T-cell (primary cell): ENCODE measurements at regions of chr3 and their contacts with region 1.

Region 1: DNA sequence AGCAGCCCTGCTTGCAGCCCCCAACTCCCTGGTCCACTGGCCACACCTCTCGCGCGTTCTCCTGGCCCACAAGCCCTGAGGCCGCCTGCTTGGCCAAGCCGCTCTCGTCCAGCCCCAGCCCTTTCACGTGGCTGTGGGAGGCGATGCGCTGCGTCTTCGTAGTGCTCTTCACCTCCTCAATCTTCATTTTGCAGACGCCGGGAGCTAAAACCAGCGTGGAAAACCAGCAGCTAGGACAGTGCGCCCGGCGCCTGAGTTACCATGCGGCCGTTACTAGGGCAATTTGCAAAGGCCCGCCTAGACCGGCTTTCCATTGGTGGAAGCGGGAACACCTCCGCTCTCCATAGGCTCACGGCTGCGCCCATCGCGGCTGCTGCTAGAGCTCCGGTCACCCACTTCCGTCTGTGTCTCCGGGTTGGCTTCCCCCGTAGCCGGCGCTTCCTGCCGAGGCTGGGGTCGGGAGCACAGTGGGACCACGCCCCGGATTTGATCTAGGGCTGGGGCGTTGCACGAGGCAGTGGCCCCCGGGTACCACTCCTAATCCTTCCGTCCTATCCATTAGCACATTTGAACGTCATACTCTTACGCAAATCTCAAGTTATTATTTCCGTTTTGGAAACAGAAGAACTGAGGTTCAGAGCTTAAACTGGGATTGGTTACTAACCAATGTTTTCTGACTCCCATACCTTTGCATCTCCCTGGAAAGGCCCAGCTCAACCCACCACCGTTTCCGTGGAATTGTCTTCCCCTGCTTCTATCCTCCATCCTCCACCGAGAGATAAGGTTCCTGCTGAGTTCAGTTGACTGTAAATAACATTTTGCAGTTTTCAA is at the start of gene RUVBL1:
- DNase-seq: peak; percentile 87 to 99 (median 98)
- ATAC-seq: peak; percentile 94 to 99 (median 99)
- H3K4me3 ChIP-seq: peak within 1 kb of the TSS; percentile 70 to 96
- H3K4me3 Mint-ChIP-seq: peak within 1 kb of the TSS; percentile 97 to 100 (median 97)
- H3K27ac ChIP-seq: peak within 1 kb of the TSS; percentile 97
- H3K27ac Mint-ChIP-seq: peak within 1 kb of the TSS; percentile 94 to 95
- H3K4me1 ChIP-seq: peaks cover 12 to 21% of the 10 kb centered on the region in 2 experiments
- H3K4me1 Mint-ChIP-seq: peaks cover 29 to 42% (median 32%) of the 10 kb centered on the region in 3 donors
- H3K27me3 ChIP-seq: no peaks in the 10 kb centered on the region
- H3K27me3 Mint-ChIP-seq: no peaks in the 10 kb centered on the region
- total RNA-seq, gene RUVBL1: 21.4 to 33.4 (median 29.9) TPM

Region 2: DNA sequence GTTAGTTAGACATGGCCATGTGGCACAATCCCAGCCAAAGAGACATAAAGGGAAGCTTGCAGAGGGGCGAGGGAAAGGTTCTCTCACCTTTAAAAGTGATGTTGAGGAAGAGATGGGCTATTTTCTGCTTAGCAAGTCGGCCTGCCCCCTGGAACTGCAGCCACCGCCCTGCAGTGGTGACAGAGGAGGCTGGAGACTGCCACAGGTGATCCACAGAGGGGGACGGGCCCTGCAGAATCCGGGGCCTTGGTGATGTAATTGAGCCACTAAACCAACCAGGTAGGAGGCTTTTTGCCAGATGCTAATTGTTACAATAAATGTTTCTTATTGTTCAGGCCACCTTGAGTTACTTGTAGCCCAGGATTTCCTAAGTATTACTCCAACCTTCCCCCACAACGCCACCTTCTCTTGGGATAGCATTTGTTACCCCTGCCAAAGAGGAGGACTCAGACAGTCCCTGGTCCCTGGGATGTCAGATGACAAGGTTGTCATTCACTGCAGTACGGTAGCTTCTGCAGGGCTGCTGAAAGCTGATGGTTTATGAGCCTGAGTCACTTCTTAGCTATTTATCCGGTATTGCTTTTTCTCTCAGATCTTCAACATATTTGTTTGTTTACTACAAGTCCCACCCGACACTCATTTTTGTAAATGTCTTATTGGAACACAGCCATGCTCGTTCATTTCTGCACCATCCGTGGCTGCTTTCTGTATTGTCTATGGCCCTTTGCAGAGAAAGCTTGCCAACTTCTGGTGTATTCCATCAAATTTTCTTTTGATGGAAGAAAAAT is 134.8 kb before region 1 on chr3:
- CTCF ChIA-PET with region 1: no interaction called
- POLR2A ChIA-PET with region 1: no interaction called
- DNase-seq: no peak
- ATAC-seq: no peak
- H3K4me3 ChIP-seq: no peak overlapping the region
- H3K4me3 Mint-ChIP-seq: no peak overlapping the region
- H3K27ac ChIP-seq: no peak overlapping the region
- H3K27ac Mint-ChIP-seq: no peak overlapping the region
- H3K4me1 ChIP-seq: no peaks in the 10 kb centered on the region
- H3K4me1 Mint-ChIP-seq: no peaks in the 10 kb centered on the region
- H3K27me3 ChIP-seq: peaks cover 0 to 14% of the 10 kb centered on the region in 2 experiments
- H3K27me3 Mint-ChIP-seq: peaks cover 0 to 4% of the 10 kb centered on the region in 2 donors

Region 3: GRCh38 chr3:128095222-128095703 is 28.5 kb before region 1 on chr3:
- CTCF ChIA-PET with region 1: interaction called, 10 to 11 read pairs
- POLR2A ChIA-PET with region 1: no interaction called
- DNase-seq: peak; percentile 52 to 86 (median 77)
- ATAC-seq: peak; percentile 85 to 99 (median 97)
- H3K4me3 ChIP-seq: no peak overlapping the region
- H3K4me3 Mint-ChIP-seq: no peak overlapping the region
- H3K27ac ChIP-seq: no peak overlapping the region
- H3K27ac Mint-ChIP-seq: no peak overlapping the region
- H3K4me1 ChIP-seq: peaks cover 3 to 13% of the 10 kb centered on the region in 2 experiments
- H3K4me1 Mint-ChIP-seq: peaks cover 5 to 10% (median 7%) of the 10 kb centered on the region in 3 donors
- H3K27me3 ChIP-seq: no peaks in the 10 kb centered on the region
- H3K27me3 Mint-ChIP-seq: no peaks in the 10 kb centered on the region

Region 4: GRCh38 chr3:128153156-128154041 is 29.6 kb after region 1 on chr3 and contains the start of gene EEFSEC:
- CTCF ChIA-PET with region 1: interaction called, 3 to 19 read pairs
- POLR2A ChIA-PET with region 1: interaction called, 4 to 10 read pairs
- DNase-seq: peak; percentile 53 to 89 (median 76)
- ATAC-seq: peak; percentile 91 to 97 (median 94)
- H3K4me3 ChIP-seq: peak within 1 kb of the TSS; percentile 66 to 83
- H3K4me3 Mint-ChIP-seq: peak within 1 kb of the TSS; percentile 84 to 94 (median 92)
- H3K27ac ChIP-seq: peak within 1 kb of the TSS; percentile 78
- H3K27ac Mint-ChIP-seq: peak within 1 kb of the TSS; percentile 95 to 97
- H3K4me1 ChIP-seq: peaks cover 7 to 22% of the 10 kb centered on the region in 2 experiments
- H3K4me1 Mint-ChIP-seq: peaks cover 33 to 46% (median 43%) of the 10 kb centered on the region in 3 donors
- H3K27me3 ChIP-seq: no peaks in the 10 kb centered on the region
- H3K27me3 Mint-ChIP-seq: no peaks in the 10 kb centered on the region
- total RNA-seq, gene EEFSEC: 15.9 to 21.1 (median 19.1) TPM

Region 5: GRCh38 chr3:129399145-129399894 is 1275.6 kb after region 1 on chr3:
- CTCF ChIA-PET with region 1: no interaction called
- POLR2A ChIA-PET with region 1: interaction called in 1 of 2 experiments, 11 read pairs
- DNase-seq: peak; percentile 38 to 94 (median 65)
- ATAC-seq: peak; percentile 84 to 89 (median 86)
- H3K4me3 ChIP-seq: peak overlapping the region; percentile 82 to 85
- H3K4me3 Mint-ChIP-seq: peak overlapping the region; percentile 95 to 100 (median 98)
- H3K27ac ChIP-seq: peak overlapping the region; percentile 92
- H3K27ac Mint-ChIP-seq: peak overlapping the region; percentile 99 to 100
- H3K4me1 ChIP-seq: peaks cover 2 to 23% of the 10 kb centered on the region in 2 experiments
- H3K4me1 Mint-ChIP-seq: peaks cover 39 to 49% (median 45%) of the 10 kb centered on the region in 3 donors
- H3K27me3 ChIP-seq: no peaks in the 10 kb centered on the region
- H3K27me3 Mint-ChIP-seq: no peaks in the 10 kb centered on the region